ENCODE measurements at regions of chr14 and their contacts with region 1.

Region 1: DNA sequence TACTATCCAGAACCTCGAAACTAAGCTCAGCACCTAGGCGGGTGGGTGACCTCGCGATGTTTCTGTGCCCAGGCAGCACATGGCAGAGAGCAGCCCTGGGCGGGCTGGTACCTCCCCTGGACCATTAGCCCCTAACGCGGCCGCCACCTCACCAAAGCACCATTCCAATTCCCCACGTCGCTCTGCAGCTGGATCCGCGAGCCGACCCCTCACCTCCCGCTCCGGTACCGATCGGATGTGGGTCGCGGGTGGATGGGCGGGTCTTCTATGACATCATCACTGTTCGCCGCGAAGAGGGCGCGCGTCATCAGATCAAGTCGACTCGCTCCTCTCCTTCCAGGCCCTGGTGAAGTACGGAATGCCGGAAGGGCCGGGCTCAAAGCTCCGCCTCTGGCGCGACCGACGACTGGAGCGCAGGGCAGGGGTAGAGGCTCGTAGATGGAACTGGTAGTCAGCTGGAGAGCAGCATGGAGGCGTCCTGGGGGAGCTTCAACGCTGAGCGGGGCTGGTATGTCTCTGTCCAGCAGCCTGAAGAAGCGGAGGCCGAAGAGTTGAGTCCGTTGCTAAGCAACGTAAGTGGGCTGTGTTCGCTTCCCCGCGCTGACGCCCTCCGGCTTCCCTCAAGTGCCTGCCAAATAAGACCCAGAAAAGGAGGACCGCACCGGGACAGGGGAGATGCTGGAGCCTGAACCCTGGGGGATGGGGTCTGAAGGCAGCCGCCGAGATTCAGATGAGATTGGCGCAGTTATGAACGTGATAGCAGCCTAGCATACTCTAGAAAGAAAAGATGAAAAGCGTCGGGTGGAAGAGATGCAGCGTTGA is at the starts of genes SLC38A6 and TRMT5:
- DNase-seq: peak; percentile 90 to 94
- ATAC-seq: peak; percentile 82 to 90 (median 89)
- H3K4me3 ChIP-seq: peak within 1 kb of the TSS; percentile 67
- H3K4me3 Mint-ChIP-seq: no peak within 1 kb of the TSS
- H3K27ac ChIP-seq: peak within 1 kb of the TSS; percentile 75
- H3K27ac Mint-ChIP-seq: no peak within 1 kb of the TSS
- H3K4me1 ChIP-seq: peaks cover 12% of the 10 kb centered on the region
- H3K4me1 Mint-ChIP-seq: peaks cover 0 to 5% of the 10 kb centered on the region in 2 donors
- H3K27me3 ChIP-seq: no peaks in the 10 kb centered on the region
- H3K27me3 Mint-ChIP-seq: no peaks in the 10 kb centered on the region
- CTCF ChIP-seq: no peak
- total RNA-seq, gene SLC38A6: 7.1 to 11.0 (median 8.8) TPM
- total RNA-seq, gene TRMT5: 1.7 to 2.6 (median 1.9) TPM

Region 2: DNA sequence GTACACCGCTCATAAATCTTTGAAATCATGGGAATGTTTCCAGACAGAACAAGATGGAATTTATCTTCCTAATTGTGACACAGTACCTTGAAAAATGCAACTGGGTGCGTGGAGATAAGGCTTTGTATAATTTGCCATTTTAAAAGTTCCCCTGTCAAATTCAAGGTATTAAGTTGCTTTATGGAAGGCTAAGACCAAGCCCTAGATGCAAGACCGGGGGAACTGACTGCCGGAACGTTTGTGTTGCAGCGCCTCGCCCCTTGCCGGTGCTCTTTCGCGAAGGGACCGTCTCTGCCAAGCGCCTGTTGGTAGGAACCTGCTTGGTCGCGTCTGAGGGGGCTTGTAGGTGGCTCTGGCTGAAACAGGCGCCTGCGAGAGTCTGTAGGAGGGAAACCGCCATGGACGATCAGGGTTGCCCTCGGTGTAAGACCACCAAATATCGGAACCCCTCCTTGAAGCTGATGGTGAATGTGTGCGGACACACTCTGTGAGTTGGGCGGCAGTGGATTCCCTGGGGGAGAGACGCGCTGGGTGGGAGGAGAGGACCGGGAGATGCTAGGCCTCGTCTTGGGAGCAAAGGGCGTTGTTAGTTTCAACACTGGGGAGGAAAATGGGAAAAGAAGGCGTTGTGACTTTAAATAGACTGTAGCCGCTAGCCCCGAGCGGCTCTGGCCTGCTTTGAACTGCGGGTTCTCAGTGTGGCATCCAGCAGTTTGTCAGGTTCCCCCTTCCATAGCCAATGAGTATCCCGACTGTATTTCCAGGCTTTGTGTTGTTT is 246.4 kb before region 1 on chr14 and contains the start of gene MNAT1:
- intact Hi-C with region 1: loop called (anchors 5 kb)
- DNase-seq: peak; percentile 68 to 87
- ATAC-seq: peak; percentile 92 to 97 (median 93)
- H3K4me3 ChIP-seq: peak within 1 kb of the TSS; percentile 83
- H3K4me3 Mint-ChIP-seq: peak within 1 kb of the TSS; percentile 99
- H3K27ac ChIP-seq: peak within 1 kb of the TSS; percentile 44
- H3K27ac Mint-ChIP-seq: peak within 1 kb of the TSS; percentile 90 to 97
- H3K4me1 ChIP-seq: no peaks in the 10 kb centered on the region
- H3K4me1 Mint-ChIP-seq: peaks cover 30 to 32% of the 10 kb centered on the region in 2 donors
- H3K27me3 ChIP-seq: peaks cover 10% of the 10 kb centered on the region
- H3K27me3 Mint-ChIP-seq: peaks cover 9 to 16% of the 10 kb centered on the region in 2 donors
- CTCF ChIP-seq: no peak
- total RNA-seq, gene MNAT1: 33.8 to 45.4 (median 34.0) TPM